Activated CD8-positive, alpha-beta T cell treated with anti-CD3 and anti-CD28 coated beads for 36 hours (primary cell): ENCODE measurements at regions of chr1 and their contacts with region 1.

Region 1: GRCh38 chr1:40404670-40405462 is 31.3 kb downstream of the SMAP2 start:
- DNase-seq: peak; percentile 61
- ATAC-seq: peak; percentile 31
- H3K4me3 Mint-ChIP-seq: peak overlapping the region; percentile 46
- H3K27ac Mint-ChIP-seq: peak overlapping the region; percentile 89
- H3K4me1 Mint-ChIP-seq: peaks cover 76% of the 10 kb centered on the region
- H3K27me3 Mint-ChIP-seq: no peaks in the 10 kb centered on the region
- CTCF ChIP-seq: peak; percentile 95

Region 2: DNA sequence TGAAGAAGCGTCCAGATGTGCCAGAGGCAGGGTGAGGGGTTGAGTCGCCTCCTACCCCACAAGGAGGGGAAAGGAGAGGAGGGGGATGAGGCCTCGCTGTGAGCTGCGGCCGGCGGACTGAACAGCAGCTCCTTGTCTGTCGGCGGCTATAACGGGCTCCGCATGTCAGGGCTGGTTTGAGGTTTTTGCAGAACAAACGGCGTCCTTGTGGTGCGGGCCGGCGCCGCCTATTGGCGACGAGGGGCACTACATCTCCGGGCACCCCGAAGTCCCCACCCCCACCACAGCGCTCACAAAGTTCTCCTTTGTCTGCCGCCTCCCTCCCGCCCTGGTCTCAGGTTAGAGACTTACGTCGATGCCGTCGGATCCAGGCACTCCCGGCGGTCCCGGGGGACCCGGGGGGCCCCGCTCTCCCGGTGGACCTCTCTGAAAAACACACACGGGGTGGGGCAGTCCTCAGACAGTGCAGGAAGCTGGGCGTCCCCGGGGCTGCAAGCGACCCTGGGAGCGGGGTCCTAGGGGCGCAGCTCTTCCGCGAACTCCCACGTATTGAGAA is 89.5 kb before region 1 on chr1:
- CTCF ChIA-PET with region 1: interaction called, 30 read pairs
- POLR2A ChIA-PET with region 1: interaction called, 5 read pairs
- intact Hi-C with region 1: loop called (anchors 10 kb)
- DNase-seq: peak; percentile 92
- ATAC-seq: peak; percentile 82
- H3K4me3 Mint-ChIP-seq: peak overlapping the region; percentile 79
- H3K27ac Mint-ChIP-seq: no peak overlapping the region
- H3K4me1 Mint-ChIP-seq: peaks cover 31% of the 10 kb centered on the region
- H3K27me3 Mint-ChIP-seq: peaks cover 9% of the 10 kb centered on the region
- CTCF ChIP-seq: peak; percentile 93

Region 3: DNA sequence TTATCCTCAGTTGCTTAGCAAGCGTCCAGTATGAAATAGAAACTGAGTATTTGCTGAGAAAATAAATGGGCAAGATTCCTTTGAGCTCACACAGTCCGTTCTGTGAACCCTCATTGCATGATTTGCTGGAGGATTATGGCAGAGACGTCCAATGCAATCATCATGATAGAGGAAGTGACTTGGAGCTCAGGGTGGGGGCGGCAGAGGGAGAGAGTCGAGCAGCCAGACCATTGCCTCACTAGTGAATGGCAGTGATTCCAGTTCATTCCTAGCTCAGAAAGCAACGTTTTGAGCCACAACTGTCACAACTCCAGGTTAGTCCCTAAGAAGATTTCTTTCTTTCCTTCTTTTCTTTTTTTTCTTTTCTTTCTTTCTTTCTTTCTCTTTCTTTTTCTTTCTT is 60.3 kb before region 1 on chr1:
- CTCF ChIA-PET with region 1: interaction called, 56 read pairs
- POLR2A ChIA-PET with region 1: interaction called, 7 read pairs
- intact Hi-C with region 1: loop called (anchors 2 kb)
- DNase-seq: peak; percentile 55
- ATAC-seq: peak; percentile 61
- H3K4me3 Mint-ChIP-seq: peak overlapping the region; percentile 51
- H3K27ac Mint-ChIP-seq: peak overlapping the region; percentile 16
- H3K4me1 Mint-ChIP-seq: peaks cover 45% of the 10 kb centered on the region
- H3K27me3 Mint-ChIP-seq: no peaks in the 10 kb centered on the region
- CTCF ChIP-seq: no peak

Region 4: DNA sequence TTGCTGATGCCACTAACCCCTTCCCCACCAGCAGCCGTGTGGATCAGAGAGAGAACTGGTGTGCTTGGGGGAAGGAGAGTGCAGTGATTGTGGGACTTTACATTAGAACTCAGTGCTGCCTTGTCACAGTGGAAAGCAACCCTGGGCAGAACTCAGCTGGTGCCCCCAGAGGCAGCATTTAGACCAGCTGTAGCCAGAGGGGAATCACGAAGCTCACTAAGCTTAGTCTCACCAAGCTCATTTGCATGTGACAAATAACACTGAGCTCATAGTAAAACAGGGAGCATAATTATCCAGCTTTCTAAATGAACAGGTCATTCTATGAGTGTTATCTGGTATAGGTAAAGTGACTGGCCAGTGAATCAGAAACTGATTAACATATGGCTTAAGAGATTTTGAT is 41.1 kb before region 1 on chr1:
- CTCF ChIA-PET with region 1: interaction called, 12 read pairs
- POLR2A ChIA-PET with region 1: interaction called, 3 read pairs
- intact Hi-C with region 1: no loop called
- DNase-seq: peak; percentile 68
- ATAC-seq: peak; percentile 99
- H3K4me3 Mint-ChIP-seq: no peak overlapping the region
- H3K27ac Mint-ChIP-seq: no peak overlapping the region
- H3K4me1 Mint-ChIP-seq: peaks cover 13% of the 10 kb centered on the region
- H3K27me3 Mint-ChIP-seq: no peaks in the 10 kb centered on the region
- CTCF ChIP-seq: peak; percentile 32

Region 5: GRCh38 chr1:40373338-40374283 is 31.3 kb before region 1 on chr1 and contains the start of gene SMAP2:
- CTCF ChIA-PET with region 1: interaction called, 13 read pairs
- POLR2A ChIA-PET with region 1: interaction called, 278 read pairs
- intact Hi-C with region 1: no loop called
- DNase-seq: peak; percentile 96
- ATAC-seq: peak; percentile 89
- H3K4me3 Mint-ChIP-seq: peak within 1 kb of the TSS; percentile 97
- H3K27ac Mint-ChIP-seq: peak within 1 kb of the TSS; percentile 98
- H3K4me1 Mint-ChIP-seq: peaks cover 41% of the 10 kb centered on the region
- H3K27me3 Mint-ChIP-seq: no peaks in the 10 kb centered on the region
- CTCF ChIP-seq: no peak
- total RNA-seq, gene SMAP2: 204 to 209 TPM

Region 6: DNA sequence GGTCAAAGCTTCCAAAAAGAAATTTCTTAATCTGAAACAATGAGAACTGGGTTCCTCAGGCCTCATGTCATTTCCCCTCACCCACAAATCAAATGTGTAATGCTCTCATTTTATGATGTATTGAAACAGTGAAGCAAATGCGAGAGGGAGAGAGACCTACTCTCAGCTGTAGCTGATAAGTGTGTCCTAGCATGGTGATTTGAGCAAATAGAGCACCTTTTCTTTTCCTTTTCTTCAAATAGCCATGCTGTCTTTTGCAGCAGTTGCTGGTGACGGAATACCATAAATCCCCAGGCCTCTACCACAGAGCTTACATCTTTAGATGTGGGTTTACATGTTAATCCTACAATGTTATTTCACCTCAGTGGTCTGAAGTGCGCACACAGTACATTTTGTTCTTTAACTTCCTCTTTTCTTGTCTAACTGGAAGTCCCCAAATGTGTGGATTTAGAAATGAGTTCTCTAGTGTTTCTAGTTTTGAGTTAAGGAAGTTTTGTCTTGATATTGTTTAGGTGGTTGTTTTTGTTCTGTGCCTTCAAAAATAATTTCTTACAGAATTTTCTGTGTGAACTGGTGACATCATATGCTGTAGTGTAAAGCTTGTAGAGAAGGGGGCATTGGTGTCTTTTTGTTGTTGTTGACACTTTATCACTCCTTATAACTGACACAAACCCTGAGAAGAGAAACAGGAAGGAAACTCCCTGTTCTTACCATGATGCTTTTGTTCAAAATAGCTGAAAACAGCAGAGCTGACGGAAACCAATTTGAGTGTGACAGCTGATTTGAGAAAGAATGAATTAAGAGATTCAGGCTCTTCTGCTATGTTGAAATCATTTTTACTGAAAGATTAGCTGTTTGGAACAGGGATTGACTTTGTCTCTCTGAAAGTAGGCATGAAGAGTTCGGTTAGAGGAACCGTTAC is 19.2 kb before region 1 on chr1:
- CTCF ChIA-PET with region 1: interaction called, 62 read pairs
- POLR2A ChIA-PET with region 1: interaction called, 278 read pairs
- intact Hi-C with region 1: loop called (anchors 1 kb)
- DNase-seq: peak; percentile 85
- ATAC-seq: peak; percentile 67
- H3K4me3 Mint-ChIP-seq: peak overlapping the region; percentile 78
- H3K27ac Mint-ChIP-seq: peak overlapping the region; percentile 99
- H3K4me1 Mint-ChIP-seq: peaks cover 78% of the 10 kb centered on the region
- H3K27me3 Mint-ChIP-seq: no peaks in the 10 kb centered on the region
- CTCF ChIP-seq: no peak